IMR-90 (cell line): ENCODE measurements at regions of chr1 and their contacts with region 1.

Region 1: DNA sequence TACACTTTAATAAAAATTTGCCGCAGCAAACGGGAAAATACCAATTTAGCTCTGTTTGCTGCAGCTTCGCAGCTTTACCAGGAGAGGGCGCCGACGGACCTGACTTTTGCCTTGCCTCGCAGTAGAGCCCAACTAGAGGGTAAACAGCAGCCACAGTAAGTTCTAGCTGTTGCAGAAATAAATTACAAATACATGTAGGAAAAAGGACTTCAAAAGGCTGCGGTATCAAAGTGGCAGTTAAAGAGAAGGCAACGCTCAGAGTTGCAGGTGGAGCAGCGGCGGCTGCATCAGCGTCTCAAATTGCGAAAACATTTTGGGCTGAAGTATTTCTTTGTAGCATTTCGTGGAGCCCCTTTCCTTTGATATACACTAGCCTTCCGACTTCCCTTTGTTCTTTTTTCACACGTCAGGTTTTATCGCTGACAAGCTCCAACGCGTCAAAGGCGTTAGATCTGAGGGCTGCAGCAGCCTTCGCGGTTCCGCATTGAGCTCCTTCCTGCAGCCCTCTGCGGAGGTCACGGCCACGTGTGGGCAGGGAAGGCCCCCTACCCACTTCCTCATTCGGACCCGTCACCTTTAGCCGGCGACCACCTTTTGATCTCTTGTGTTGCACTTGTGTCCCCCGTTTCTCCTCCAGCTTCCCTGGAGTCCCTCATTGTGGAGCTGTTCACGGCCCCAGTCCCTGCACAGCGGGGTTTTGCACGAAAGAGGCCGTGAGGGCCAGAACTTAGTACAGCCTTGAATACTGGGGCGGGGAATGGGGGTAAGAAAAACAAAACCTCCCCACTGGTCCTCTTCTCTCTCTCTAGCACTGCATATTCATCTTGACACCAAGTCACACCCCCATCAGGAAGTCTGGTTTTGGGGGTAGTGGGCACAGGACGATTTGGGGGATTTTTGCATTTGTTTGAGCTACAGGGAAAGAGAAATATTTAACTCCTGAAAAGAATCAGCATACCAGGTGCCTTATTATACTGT is 72.8 kb downstream of the S1PR1 start:
- DNase-seq: peak; percentile 56
- ATAC-seq: peak; percentile 96
- H3K4me3 ChIP-seq: no peak overlapping the region
- H3K27ac ChIP-seq: no peak overlapping the region
- H3K4me1 ChIP-seq: no peaks in the 10 kb centered on the region
- H3K27me3 ChIP-seq: peaks cover 51% of the 10 kb centered on the region
- CTCF ChIP-seq: peak; percentile 91
- POLR2A ChIP-seq: no peak
- RAD21 ChIP-seq: peak; percentile 79

Region 2: GRCh38 chr1:99516141-99516540 is 1793.5 kb before region 1 on chr1:
- CTCF ChIA-PET with region 1: no interaction called
- POLR2A ChIA-PET with region 1: no interaction called
- dilution Hi-C with region 1: no loop called
- in situ Hi-C with region 1: no loop called
- intact Hi-C with region 1: no loop called
- DNase-seq: no peak
- ATAC-seq: no peak
- H3K4me3 ChIP-seq: no peak overlapping the region
- H3K27ac ChIP-seq: no peak overlapping the region
- H3K4me1 ChIP-seq: no peaks in the 10 kb centered on the region
- H3K27me3 ChIP-seq: no peaks in the 10 kb centered on the region
- CTCF ChIP-seq: no peak
- POLR2A ChIP-seq: no peak
- RAD21 ChIP-seq: no peak

Region 3: GRCh38 chr1:101344745-101345144 is 35.1 kb after region 1 on chr1:
- CTCF ChIA-PET with region 1: interaction called, 4 read pairs
- POLR2A ChIA-PET with region 1: no interaction called
- dilution Hi-C with region 1: no loop called
- in situ Hi-C with region 1: loop called (anchors 5 kb)
- intact Hi-C with region 1: no loop called
- DNase-seq: no peak
- ATAC-seq: no peak
- H3K4me3 ChIP-seq: no peak overlapping the region
- H3K27ac ChIP-seq: no peak overlapping the region
- H3K4me1 ChIP-seq: no peaks in the 10 kb centered on the region
- H3K27me3 ChIP-seq: no peaks in the 10 kb centered on the region; the same call in 1 of the 2 replicates
- CTCF ChIP-seq: no peak
- POLR2A ChIP-seq: no peak
- RAD21 ChIP-seq: no peak

Region 4: GRCh38 chr1:101357444-101357986 is 47.9 kb after region 1 on chr1:
- CTCF ChIA-PET with region 1: interaction called, 28 read pairs
- POLR2A ChIA-PET with region 1: interaction called, 4 read pairs
- dilution Hi-C with region 1: no loop called
- in situ Hi-C with region 1: no loop called
- intact Hi-C with region 1: loop called (anchors 1 kb)
- DNase-seq: peak; percentile 80
- ATAC-seq: peak; percentile 100
- H3K4me3 ChIP-seq: no peak overlapping the region
- H3K27ac ChIP-seq: no peak overlapping the region
- H3K4me1 ChIP-seq: no peaks in the 10 kb centered on the region
- H3K27me3 ChIP-seq: peaks cover 11% of the 10 kb centered on the region
- CTCF ChIP-seq: peak; percentile 79
- POLR2A ChIP-seq: no peak
- RAD21 ChIP-seq: peak; percentile 66

Region 5: GRCh38 chr1:101438359-101438758 is 128.7 kb after region 1 on chr1:
- CTCF ChIA-PET with region 1: interaction called, 22 read pairs
- POLR2A ChIA-PET with region 1: no interaction called
- dilution Hi-C with region 1: no loop called
- in situ Hi-C with region 1: no loop called
- intact Hi-C with region 1: loop called (anchors 1 kb)
- DNase-seq: peak; percentile 2
- ATAC-seq: peak; percentile 57; the same call in 1 of the 2 replicates
- H3K4me3 ChIP-seq: no peak overlapping the region
- H3K27ac ChIP-seq: no peak overlapping the region
- H3K4me1 ChIP-seq: no peaks in the 10 kb centered on the region
- H3K27me3 ChIP-seq: peaks cover 5% of the 10 kb centered on the region
- CTCF ChIP-seq: peak; percentile 37
- POLR2A ChIP-seq: no peak
- RAD21 ChIP-seq: peak; percentile 38; the same call in 1 of the 2 replicates